ENCODE measurements at regions of chr1 and their contacts with region 1.

Region 1: DNA sequence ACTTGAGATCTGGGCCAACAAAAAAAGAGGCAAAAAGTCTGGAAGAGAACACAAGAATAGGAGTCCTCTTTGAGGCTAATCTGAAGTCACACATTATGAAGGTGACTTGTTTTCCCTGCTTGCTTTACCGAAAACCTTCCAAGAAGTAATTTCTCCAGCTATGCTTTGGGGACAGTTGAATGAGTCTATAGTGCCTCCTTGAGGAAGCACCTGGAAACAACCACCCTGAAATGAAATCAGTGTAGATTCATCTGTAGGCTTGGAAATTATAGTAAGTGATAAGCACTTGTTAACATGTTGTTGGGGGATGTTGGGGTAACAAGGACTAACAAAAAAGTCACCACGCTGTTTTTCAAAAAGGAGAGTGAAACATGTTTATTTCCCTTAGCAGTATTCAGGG is 23.4 kb upstream of the RPTN start:
- DNase-seq: peak; percentile 80
- H3K4me3 Mint-ChIP-seq: no peak overlapping the region
- H3K27ac Mint-ChIP-seq: peak overlapping the region; percentile 82
- H3K4me1 Mint-ChIP-seq: peaks cover 64% of the 10 kb centered on the region
- H3K27me3 Mint-ChIP-seq: no peaks in the 10 kb centered on the region
- CTCF ChIP-seq: peak; percentile 94

Region 2: DNA sequence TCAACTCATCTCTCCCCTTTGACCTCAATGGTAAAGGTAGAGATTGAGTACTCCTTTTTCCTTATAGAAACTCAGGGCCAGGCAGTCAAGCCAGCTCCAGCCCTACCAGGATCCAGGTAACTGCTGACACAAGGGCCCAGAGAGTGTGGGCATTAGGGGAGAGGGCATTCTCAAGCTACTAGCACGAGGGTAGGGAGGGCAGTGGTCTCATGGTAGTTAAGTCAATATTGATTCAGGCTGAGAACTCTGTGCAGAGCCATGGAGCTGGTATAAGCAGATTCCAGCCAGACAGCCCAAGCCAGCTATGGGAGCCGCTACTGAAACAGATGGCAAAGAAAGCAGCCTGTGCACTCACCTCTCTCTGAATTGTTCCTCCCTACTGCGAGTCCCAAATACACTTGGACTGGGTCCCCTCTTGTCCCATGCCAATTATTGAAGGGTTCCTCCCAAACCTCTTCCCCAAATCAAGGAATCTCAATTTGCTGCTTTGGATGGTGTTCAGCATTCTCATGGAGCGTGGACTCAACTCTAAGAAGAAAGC is 858.0 kb before region 1 on chr1:
- CTCF ChIA-PET with region 1: no interaction called
- POLR2A ChIA-PET with region 1: no interaction called
- intact Hi-C with region 1: no loop called
- DNase-seq: no peak
- H3K4me3 Mint-ChIP-seq: no peak overlapping the region
- H3K27ac Mint-ChIP-seq: peak overlapping the region; percentile 90
- H3K4me1 Mint-ChIP-seq: peaks cover 43% of the 10 kb centered on the region
- H3K27me3 Mint-ChIP-seq: no peaks in the 10 kb centered on the region
- CTCF ChIP-seq: no peak

Region 3: GRCh38 chr1:152104859-152105258 is 77.6 kb before region 1 on chr1:
- CTCF ChIA-PET with region 1: interaction called, 78 read pairs
- POLR2A ChIA-PET with region 1: interaction called, 42 read pairs
- intact Hi-C with region 1: no loop called
- DNase-seq: peak; percentile 54
- H3K4me3 Mint-ChIP-seq: no peak overlapping the region
- H3K27ac Mint-ChIP-seq: no peak overlapping the region
- H3K4me1 Mint-ChIP-seq: peaks cover 5% of the 10 kb centered on the region
- H3K27me3 Mint-ChIP-seq: peaks cover 13% of the 10 kb centered on the region
- CTCF ChIP-seq: no peak

Region 4: DNA sequence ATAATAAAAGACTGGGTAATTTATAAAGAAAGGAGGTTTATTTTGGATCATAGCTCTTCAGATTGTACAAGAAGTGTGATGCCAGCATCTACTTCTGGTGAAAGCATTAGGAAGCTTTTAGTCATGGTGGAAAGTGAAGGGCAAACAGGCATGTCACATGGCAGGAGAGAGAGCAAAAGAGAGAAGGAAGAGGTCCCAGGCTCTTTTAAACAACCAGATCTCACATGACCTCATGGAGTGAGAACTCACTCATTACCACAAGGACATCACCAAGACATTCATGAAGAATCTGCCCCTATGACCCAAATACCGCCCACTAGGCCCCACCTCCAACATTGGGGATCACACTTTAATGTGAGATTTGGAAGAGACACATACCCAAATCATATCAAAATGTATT is 33.5 kb before region 1 on chr1:
- CTCF ChIA-PET with region 1: interaction called, 227 read pairs
- POLR2A ChIA-PET with region 1: interaction called, 46 read pairs
- intact Hi-C with region 1: no loop called
- DNase-seq: no peak
- H3K4me3 Mint-ChIP-seq: no peak overlapping the region
- H3K27ac Mint-ChIP-seq: no peak overlapping the region
- H3K4me1 Mint-ChIP-seq: no peaks in the 10 kb centered on the region
- H3K27me3 Mint-ChIP-seq: no peaks in the 10 kb centered on the region
- CTCF ChIP-seq: no peak

Region 5: DNA sequence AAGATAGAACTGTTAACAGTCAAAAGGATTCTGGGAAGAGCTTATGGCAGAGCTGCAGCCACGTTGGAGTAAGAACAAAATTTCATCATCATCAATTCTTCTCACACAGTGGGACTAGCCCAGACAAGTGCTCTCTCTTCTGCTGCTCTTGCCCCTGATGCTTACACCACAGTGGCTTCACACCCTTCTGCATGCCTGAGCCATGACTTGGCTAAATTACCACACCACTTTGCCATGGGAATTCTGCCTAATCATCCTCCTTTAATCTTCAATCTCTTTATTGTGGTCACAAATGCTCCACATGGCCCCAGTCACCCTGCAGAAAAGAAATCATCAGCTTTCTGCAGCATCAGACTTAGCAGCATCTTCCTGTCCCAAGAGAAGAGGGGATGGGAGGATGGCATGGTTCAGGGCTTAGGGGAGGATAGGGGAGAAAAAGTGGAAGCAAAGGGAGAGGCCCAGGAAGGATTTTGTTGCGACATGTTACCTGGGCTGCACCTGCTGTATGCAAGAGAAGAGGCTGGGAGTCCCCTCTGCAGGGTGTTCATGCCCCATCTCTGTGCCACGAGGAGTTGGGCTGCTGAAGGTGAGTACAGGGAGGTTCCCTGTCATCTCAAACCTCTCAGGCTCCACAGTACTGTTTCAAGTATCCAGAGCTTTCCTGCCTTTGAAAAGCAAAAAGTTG is 14.5 kb before region 1 on chr1:
- CTCF ChIA-PET with region 1: interaction called, 351 read pairs
- POLR2A ChIA-PET with region 1: interaction called, 503 read pairs
- intact Hi-C with region 1: loop called (anchors 1 kb)
- DNase-seq: peak; percentile 100
- H3K4me3 Mint-ChIP-seq: peak overlapping the region; percentile 49
- H3K27ac Mint-ChIP-seq: peak overlapping the region; percentile 99
- H3K4me1 Mint-ChIP-seq: peaks cover 70% of the 10 kb centered on the region
- H3K27me3 Mint-ChIP-seq: no peaks in the 10 kb centered on the region
- CTCF ChIP-seq: no peak